ENCODE measurements at regions of chr20 and their contacts with region 1.

Region 1: DNA sequence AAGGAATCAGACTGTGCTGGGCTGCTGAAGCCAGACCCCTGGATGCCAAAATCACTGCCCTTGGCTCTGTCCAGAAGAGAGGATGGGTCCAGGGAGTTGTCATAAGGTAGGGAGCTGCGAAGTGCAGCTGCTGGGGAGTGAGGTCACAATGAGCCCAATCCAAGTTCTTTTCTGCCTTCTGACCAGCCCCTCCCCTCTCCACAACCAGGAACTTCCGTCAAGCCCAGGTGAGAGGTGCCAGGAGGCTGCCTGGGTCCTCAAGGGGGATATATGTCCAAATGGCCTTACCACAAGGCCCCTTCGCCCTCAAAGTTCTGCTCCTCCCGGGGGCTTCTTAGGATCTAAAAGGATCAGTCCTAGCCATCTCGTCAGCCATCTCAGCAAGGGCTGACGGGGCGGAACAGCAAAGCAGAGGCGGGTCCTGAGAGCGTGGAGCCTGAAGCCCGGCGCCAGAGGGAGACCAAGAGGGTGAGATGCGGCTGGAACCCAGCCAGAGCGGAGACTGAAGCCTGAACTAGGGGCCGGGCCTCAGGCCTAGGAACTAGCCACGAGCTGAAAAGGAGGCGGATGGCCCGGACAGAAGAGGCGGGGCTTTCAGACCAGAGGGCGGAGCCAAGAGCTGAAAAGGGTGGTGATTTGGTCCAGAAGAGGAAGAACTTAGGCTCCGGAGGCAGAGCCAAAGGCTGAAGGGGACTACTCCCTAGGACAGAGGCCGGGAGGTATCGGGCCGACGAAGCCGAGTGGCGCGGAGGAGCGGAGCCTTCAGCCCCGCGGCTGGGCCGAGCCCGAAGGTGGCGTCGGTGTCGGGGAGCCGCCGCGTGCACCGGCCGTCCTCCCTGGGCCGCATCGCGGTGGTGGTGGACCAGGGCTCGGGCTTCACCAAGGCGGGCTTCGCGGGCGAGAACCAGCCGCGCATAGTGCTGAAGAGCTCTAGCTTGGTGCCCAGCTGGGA is at the start of gene ACTL10:
- DNase-seq: peak; percentile 65 to 85 (median 66)
- H3K4me3 ChIP-seq: peak within 1 kb of the TSS; percentile 47 to 52
- H3K4me3 Mint-ChIP-seq: peak within 1 kb of the TSS; percentile 95 to 98 (median 97)
- H3K27ac ChIP-seq: peak within 1 kb of the TSS; percentile 60
- H3K27ac Mint-ChIP-seq: peak within 1 kb of the TSS; percentile 95 to 99 (median 97)
- H3K4me1 ChIP-seq: peaks cover 41% of the 10 kb centered on the region
- H3K4me1 Mint-ChIP-seq: peaks cover 20 to 71% (median 36%) of the 10 kb centered on the region in 4 donors
- H3K27me3 ChIP-seq: no peaks in the 10 kb centered on the region
- H3K27me3 Mint-ChIP-seq: no peaks in the 10 kb centered on the region
- total RNA-seq, gene ACTL10: 5.5 to 6.0 TPM

Region 2: GRCh38 chr20:33076662-33077372 is 589.8 kb before region 1 on chr20:
- CTCF ChIA-PET with region 1: no interaction called
- POLR2A ChIA-PET with region 1: no interaction called
- intact Hi-C with region 1: no loop called
- DNase-seq: peak in 4 of 5 donors; percentile 24 to 33 (median 29)
- H3K4me3 ChIP-seq: no peak overlapping the region
- H3K4me3 Mint-ChIP-seq: no peak overlapping the region
- H3K27ac ChIP-seq: no peak overlapping the region
- H3K27ac Mint-ChIP-seq: peak overlapping the region in 1 of 7 donors; percentile 62
- H3K4me1 ChIP-seq: no peaks in the 10 kb centered on the region
- H3K4me1 Mint-ChIP-seq: peaks cover 0 to 9% (median 4%) of the 10 kb centered on the region in 4 donors
- H3K27me3 ChIP-seq: no peaks in the 10 kb centered on the region
- H3K27me3 Mint-ChIP-seq: peaks cover 0 to 2% of the 10 kb centered on the region in 2 donors

Region 3: GRCh38 chr20:33443512-33444239 is 222.9 kb before region 1 on chr20 and contains the start of gene SNTA1:
- CTCF ChIA-PET with region 1: interaction called, 7 read pairs
- POLR2A ChIA-PET with region 1: interaction called, 22 read pairs
- intact Hi-C with region 1: loop called (anchors 1 kb)
- DNase-seq: peak; percentile 80 to 88 (median 81)
- H3K4me3 ChIP-seq: peak within 1 kb of the TSS; percentile 42 to 85
- H3K4me3 Mint-ChIP-seq: peak within 1 kb of the TSS; percentile 92 to 97 (median 92)
- H3K27ac ChIP-seq: peak within 1 kb of the TSS; percentile 74
- H3K27ac Mint-ChIP-seq: peak within 1 kb of the TSS; percentile 90 to 97 (median 94)
- H3K4me1 ChIP-seq: peaks cover 17% of the 10 kb centered on the region
- H3K4me1 Mint-ChIP-seq: peaks cover 14 to 28% (median 22%) of the 10 kb centered on the region in 4 donors
- H3K27me3 ChIP-seq: no peaks in the 10 kb centered on the region
- H3K27me3 Mint-ChIP-seq: no peaks in the 10 kb centered on the region
- total RNA-seq, gene SNTA1: 5.1 to 5.7 TPM

Region 4: DNA sequence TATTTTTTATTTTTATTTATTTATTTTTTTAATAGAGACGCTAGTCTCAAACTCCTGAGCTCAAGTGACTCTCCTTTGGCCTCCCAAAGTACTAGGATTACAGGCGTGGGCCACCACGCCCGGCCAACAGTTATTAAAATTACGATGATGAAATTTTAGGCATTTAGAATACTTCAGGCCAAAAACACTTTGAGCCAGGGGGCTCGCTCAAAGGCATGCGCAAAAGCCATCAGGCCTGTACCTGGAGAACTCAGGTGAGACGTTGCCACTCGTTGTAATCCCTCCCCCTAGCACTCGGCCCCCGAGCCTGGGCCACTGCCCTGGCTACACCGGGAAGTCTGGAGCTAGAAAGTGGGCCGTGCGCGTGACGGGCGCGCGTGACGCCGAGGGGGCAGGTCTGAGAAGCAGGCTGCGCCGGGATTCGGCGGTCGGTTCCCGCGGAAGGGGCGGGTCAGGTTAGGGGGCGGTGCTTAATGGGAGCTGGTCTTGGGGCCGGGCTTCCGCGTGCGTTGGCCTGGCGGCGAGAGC is 177.0 kb before region 1 on chr20:
- CTCF ChIA-PET with region 1: interaction called, 9 read pairs
- POLR2A ChIA-PET with region 1: interaction called, 47 read pairs
- intact Hi-C with region 1: loop called (anchors 1 kb)
- DNase-seq: peak; percentile 98 to 99 (median 99)
- H3K4me3 ChIP-seq: peak overlapping the region; percentile 61 to 70
- H3K4me3 Mint-ChIP-seq: peak overlapping the region; percentile 81 to 96 (median 86)
- H3K27ac ChIP-seq: peak overlapping the region; percentile 89
- H3K27ac Mint-ChIP-seq: peak overlapping the region; percentile 92 to 95 (median 94)
- H3K4me1 ChIP-seq: peaks cover 16% of the 10 kb centered on the region
- H3K4me1 Mint-ChIP-seq: peaks cover 8 to 24% (median 18%) of the 10 kb centered on the region in 4 donors
- H3K27me3 ChIP-seq: no peaks in the 10 kb centered on the region
- H3K27me3 Mint-ChIP-seq: no peaks in the 10 kb centered on the region

Region 5: DNA sequence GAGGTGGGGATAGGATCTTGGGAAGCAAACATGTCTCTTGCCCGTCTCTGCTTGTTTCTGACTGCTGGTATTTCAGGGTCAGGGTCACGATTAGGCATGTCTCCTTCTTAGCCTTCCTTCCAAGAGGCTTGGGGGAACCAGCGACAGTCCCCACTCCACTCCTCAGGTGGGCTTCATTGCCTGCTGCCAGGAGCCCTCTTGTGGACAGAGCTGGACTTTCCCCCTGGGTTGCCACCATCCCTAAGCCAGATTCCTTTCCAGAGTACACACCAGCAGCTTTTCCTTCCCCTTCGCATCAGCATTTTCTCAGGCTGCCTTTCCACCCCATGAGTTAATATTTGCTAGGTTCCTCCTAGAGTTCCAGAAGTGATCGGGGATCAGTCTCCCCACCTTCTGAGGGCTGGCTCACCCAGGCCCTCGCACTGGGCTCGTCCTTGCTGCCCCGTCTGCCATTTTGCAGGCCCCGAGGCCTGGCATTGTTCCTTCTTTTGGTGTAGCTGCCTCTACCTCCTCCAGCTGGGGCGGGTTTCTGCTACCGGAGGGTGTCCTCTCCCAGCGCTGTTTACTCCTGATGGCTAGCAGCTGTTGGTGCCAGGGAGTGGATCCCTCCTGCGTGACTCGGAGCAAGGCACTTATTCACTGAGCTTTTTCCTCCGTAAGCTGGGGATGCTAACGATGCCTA is 13.2 kb before region 1 on chr20:
- CTCF ChIA-PET with region 1: interaction called, 60 read pairs
- POLR2A ChIA-PET with region 1: interaction called, 15 read pairs
- intact Hi-C with region 1: loop called (anchors 2 kb)
- DNase-seq: peak in 2 of 5 donors; percentile 20 to 32
- H3K4me3 ChIP-seq: no peak overlapping the region
- H3K4me3 Mint-ChIP-seq: no peak overlapping the region
- H3K27ac ChIP-seq: no peak overlapping the region
- H3K27ac Mint-ChIP-seq: peak overlapping the region in 3 of 7 donors; percentile 56 to 75 (median 68)
- H3K4me1 ChIP-seq: no peaks in the 10 kb centered on the region
- H3K4me1 Mint-ChIP-seq: peaks cover 5 to 18% (median 9%) of the 10 kb centered on the region in 4 donors
- H3K27me3 ChIP-seq: no peaks in the 10 kb centered on the region
- H3K27me3 Mint-ChIP-seq: no peaks in the 10 kb centered on the region

Region 6: DNA sequence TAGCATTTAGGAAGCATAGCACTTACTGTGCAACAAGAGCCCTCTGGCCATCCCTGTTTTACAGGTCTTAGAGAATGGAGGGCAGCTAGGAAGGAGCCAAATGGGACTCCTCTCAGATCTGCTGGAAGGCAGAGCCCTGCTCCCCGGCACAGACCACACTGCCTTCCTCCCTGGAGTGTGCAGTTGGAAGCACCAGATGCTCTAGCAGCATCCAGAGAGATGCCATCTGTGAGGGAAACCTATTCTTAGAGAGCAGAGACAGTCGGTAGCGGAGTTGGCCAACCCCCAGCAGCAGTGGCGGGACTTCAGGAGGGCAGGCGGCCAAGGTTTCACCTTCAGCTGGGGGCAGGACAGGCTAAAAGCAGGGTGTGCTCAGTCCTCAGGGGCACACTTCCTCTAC is 36.3 kb after region 1 on chr20:
- CTCF ChIA-PET with region 1: no interaction called
- POLR2A ChIA-PET with region 1: no interaction called
- intact Hi-C with region 1: no loop called
- DNase-seq: no peak
- H3K4me3 ChIP-seq: no peak overlapping the region
- H3K4me3 Mint-ChIP-seq: no peak overlapping the region
- H3K27ac ChIP-seq: no peak overlapping the region
- H3K27ac Mint-ChIP-seq: peak overlapping the region in 2 of 7 donors; percentile 20 to 25
- H3K4me1 ChIP-seq: no peaks in the 10 kb centered on the region
- H3K4me1 Mint-ChIP-seq: no peaks in the 10 kb centered on the region
- H3K27me3 ChIP-seq: no peaks in the 10 kb centered on the region
- H3K27me3 Mint-ChIP-seq: no peaks in the 10 kb centered on the region

Region 7: GRCh38 chr20:33719989-33720709 is 53.6 kb after region 1 on chr20 and contains the start of gene PXMP4:
- CTCF ChIA-PET with region 1: interaction called, 4 read pairs
- POLR2A ChIA-PET with region 1: interaction called, 36 read pairs
- intact Hi-C with region 1: no loop called
- DNase-seq: peak; percentile 90 to 96 (median 94)
- H3K4me3 ChIP-seq: peak within 1 kb of the TSS; percentile 25 to 88
- H3K4me3 Mint-ChIP-seq: peak within 1 kb of the TSS; percentile 86 to 97 (median 90)
- H3K27ac ChIP-seq: peak within 1 kb of the TSS; percentile 67
- H3K27ac Mint-ChIP-seq: peak within 1 kb of the TSS; percentile 81 to 98 (median 92)
- H3K4me1 ChIP-seq: peaks cover 15% of the 10 kb centered on the region
- H3K4me1 Mint-ChIP-seq: peaks cover 18 to 40% (median 23%) of the 10 kb centered on the region in 4 donors
- H3K27me3 ChIP-seq: no peaks in the 10 kb centered on the region
- H3K27me3 Mint-ChIP-seq: no peaks in the 10 kb centered on the region
- total RNA-seq, gene PXMP4: 15.7 to 16.3 TPM

Measured in CD4-positive, alpha-beta memory T cell (primary cell).